K562 (cell line): ENCODE measurements at regions of chr13 and their contacts with region 1.

Region 1: GRCh38 chr13:27125357-27126282 is 46.0 kb downstream of the USP12 start:
- DNase-seq: peak; percentile 33 to 92 (median 52)
- ATAC-seq: peak; percentile 97
- H3K4me3 ChIP-seq: peak overlapping the region; percentile 57
- H3K27ac ChIP-seq: peak overlapping the region; percentile 99
- H3K4me1 ChIP-seq: peaks cover 0 to 22% of the 10 kb centered on the region in 2 experiments; a peak in 2 of 5 replicates
- H3K27me3 ChIP-seq: no peaks in the 10 kb centered on the region
- CTCF ChIP-seq: peak; percentile 39 to 65 (median 56)
- EP300 ChIP-seq: no peak
- POLR2A ChIP-seq: peak; percentile 76
- RAD21 ChIP-seq: peak; percentile 36 to 72

Region 2: GRCh38 chr13:26929971-26930730 is 195.5 kb before region 1 on chr13:
- CTCF ChIA-PET with region 1: no interaction called
- POLR2A ChIA-PET with region 1: no interaction called
- in situ Hi-C with region 1: no loop called
- intact Hi-C with region 1: no loop called
- DNase-seq: peak; percentile 71 to 77 (median 72)
- ATAC-seq: peak; percentile 95
- H3K4me3 ChIP-seq: no peak overlapping the region
- H3K27ac ChIP-seq: no peak overlapping the region
- H3K4me1 ChIP-seq: no peaks in the 10 kb centered on the region; a peak in 1 of 5 replicates
- H3K27me3 ChIP-seq: peaks cover 0 to 15% of the 10 kb centered on the region in 2 experiments
- CTCF ChIP-seq: peak; percentile 67 to 84 (median 81)
- EP300 ChIP-seq: no peak
- POLR2A ChIP-seq: no peak
- RAD21 ChIP-seq: peak; percentile 31 to 64

Region 3: DNA sequence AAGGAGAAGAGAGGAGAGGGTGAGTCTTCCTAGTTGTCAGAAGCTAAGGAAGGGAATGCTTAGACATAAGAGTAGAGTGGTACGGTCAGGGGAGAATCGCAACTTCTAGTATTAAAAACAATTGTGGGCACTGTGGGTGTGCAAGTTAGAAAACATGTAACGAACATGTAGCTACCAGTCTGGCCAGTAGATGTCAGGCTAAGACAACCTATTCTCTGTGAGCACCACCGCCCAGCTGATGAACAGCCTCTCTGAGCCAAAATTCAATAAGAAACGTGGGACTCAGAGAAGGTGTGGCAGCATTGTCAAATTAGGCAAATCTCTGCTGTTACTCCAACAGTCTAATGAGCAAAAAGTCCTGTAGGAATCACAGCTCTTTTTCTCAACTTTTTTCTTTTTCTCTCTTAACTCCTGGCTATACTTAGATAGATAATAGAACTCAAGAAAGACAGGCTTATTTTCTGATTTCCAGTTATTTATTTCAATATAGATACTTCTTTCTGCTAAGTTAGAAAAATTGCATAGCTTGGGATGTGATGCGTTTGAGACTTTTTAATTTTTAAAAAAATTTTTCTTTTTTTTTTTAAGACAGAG is 140.2 kb before region 1 on chr13:
- CTCF ChIA-PET with region 1: no interaction called
- POLR2A ChIA-PET with region 1: interaction called, 6 read pairs
- in situ Hi-C with region 1: no loop called
- intact Hi-C with region 1: loop called (anchors 5 kb)
- DNase-seq: peak; percentile 53 to 81 (median 63)
- ATAC-seq: peak; percentile 68
- H3K4me3 ChIP-seq: no peak overlapping the region
- H3K27ac ChIP-seq: no peak overlapping the region
- H3K4me1 ChIP-seq: peaks cover 28 to 29% of the 10 kb centered on the region in 2 experiments
- H3K27me3 ChIP-seq: no peaks in the 10 kb centered on the region; a peak in 1 of 5 replicates
- CTCF ChIP-seq: peak; percentile 68 to 83 (median 76)
- EP300 ChIP-seq: no peak
- POLR2A ChIP-seq: no peak
- RAD21 ChIP-seq: peak; percentile 84 to 91

Region 4: GRCh38 chr13:27022571-27023311 is 102.9 kb before region 1 on chr13:
- CTCF ChIA-PET with region 1: no interaction called
- POLR2A ChIA-PET with region 1: no interaction called
- in situ Hi-C with region 1: no loop called
- intact Hi-C with region 1: loop called (anchors 10 kb)
- DNase-seq: peak in 2 of 4 experiments; percentile 46 to 52
- ATAC-seq: peak; percentile 70
- H3K4me3 ChIP-seq: no peak overlapping the region
- H3K27ac ChIP-seq: peak overlapping the region; percentile 50; the same call in 2 of the 3 replicates
- H3K4me1 ChIP-seq: peaks cover 7 to 13% of the 10 kb centered on the region in 2 experiments
- H3K27me3 ChIP-seq: peaks cover 2 to 12% of the 10 kb centered on the region in 2 experiments
- CTCF ChIP-seq: no peak
- EP300 ChIP-seq: peak; percentile 39; the same call in 1 of the 2 replicates
- POLR2A ChIP-seq: no peak
- RAD21 ChIP-seq: no peak

Region 5: GRCh38 chr13:27137759-27138158 is 12.1 kb after region 1 on chr13:
- CTCF ChIA-PET with region 1: no interaction called
- POLR2A ChIA-PET with region 1: interaction called, 24 read pairs
- in situ Hi-C with region 1: no loop called
- intact Hi-C with region 1: no loop called
- DNase-seq: peak in 1 of 4 experiments; percentile 24
- ATAC-seq: peak; percentile 78
- H3K4me3 ChIP-seq: no peak overlapping the region
- H3K27ac ChIP-seq: peak overlapping the region; percentile 75
- H3K4me1 ChIP-seq: peaks cover 16 to 21% of the 10 kb centered on the region in 2 experiments; a peak in 4 of 5 replicates
- H3K27me3 ChIP-seq: no peaks in the 10 kb centered on the region
- CTCF ChIP-seq: no peak
- EP300 ChIP-seq: no peak
- POLR2A ChIP-seq: no peak
- RAD21 ChIP-seq: no peak

Region 6: DNA sequence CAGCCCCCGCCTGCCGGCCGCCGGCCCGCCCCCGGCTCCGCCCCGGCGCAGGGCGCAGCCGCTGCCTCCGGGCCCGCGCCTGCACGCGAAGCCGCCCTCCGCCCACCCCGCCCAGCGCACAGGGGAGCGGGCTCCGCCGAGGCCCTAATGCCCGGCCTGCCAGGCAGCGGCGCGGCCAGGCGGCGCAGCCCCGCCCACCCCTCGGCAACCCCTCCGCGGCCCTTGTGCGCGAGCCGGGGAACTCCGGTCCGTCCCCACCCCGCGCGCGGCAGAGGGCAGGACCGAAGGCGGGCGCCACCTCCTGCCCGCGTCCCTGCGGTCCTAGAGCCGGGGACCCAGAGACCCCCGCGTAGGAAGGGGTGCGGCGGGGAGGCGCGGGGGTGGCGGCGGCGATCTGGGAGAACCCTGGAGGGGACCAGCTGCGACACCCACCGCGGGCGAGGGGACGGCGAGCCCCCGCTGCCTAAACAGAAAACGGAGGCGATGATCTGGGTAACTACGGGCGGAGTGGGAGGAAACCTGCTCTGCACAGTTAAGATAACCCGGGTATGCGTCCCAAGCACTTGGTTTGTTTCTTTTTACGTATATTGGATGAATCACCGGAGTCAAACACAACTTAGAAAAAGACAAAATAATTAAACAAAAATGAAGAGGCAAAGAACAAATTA is 46.3 kb after region 1 on chr13:
- CTCF ChIA-PET with region 1: no interaction called
- POLR2A ChIA-PET with region 1: no interaction called
- in situ Hi-C with region 1: no loop called
- intact Hi-C with region 1: loop called (anchors 2 kb)
- DNase-seq: peak; percentile 77 to 82 (median 80)
- ATAC-seq: peak; percentile 87
- H3K4me3 ChIP-seq: peak overlapping the region; percentile 69
- H3K27ac ChIP-seq: peak overlapping the region; percentile 83
- H3K4me1 ChIP-seq: peaks cover under 1 to 34% of the 10 kb centered on the region in 2 experiments; a peak in 4 of 5 replicates
- H3K27me3 ChIP-seq: no peaks in the 10 kb centered on the region
- CTCF ChIP-seq: no peak
- EP300 ChIP-seq: peak; percentile 64; the same call in 1 of the 2 replicates
- POLR2A ChIP-seq: peak; percentile 53
- RAD21 ChIP-seq: 0 out of 4 replicates have a peak, but pooled peaks of 1 of the 2 experiments have one; percentile 6

Region 7: DNA sequence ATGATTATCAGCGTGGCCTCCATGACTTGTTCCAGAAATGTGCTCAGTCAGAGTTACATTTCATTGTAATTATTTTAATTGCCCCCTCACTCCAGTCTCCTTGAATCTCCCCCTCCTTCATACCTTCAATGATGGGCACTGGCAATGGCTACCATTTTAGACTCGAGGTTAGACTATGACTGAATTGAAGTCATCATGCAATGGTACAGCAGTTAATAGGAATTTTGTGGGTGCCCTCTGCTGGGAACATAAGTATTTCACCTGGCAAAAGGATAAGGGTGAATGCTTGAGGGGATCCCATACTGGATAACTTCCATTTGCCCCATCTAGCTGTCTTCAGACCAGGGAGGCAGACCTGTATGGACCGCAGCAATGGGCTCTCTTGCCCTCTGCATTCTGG is 78.2 kb after region 1 on chr13:
- CTCF ChIA-PET with region 1: no interaction called
- POLR2A ChIA-PET with region 1: interaction called, 3 read pairs
- in situ Hi-C with region 1: no loop called
- intact Hi-C with region 1: loop called (anchors 1 kb)
- DNase-seq: peak in 1 of 4 experiments; percentile 42
- ATAC-seq: peak; percentile 82
- H3K4me3 ChIP-seq: no peak overlapping the region
- H3K27ac ChIP-seq: no peak overlapping the region
- H3K4me1 ChIP-seq: peaks cover 0 to 4% of the 10 kb centered on the region in 2 experiments; a peak in 3 of 5 replicates
- H3K27me3 ChIP-seq: no peaks in the 10 kb centered on the region
- CTCF ChIP-seq: peak; percentile 38 to 48 (median 44); a peak in 5 of 6 replicates
- EP300 ChIP-seq: no peak
- POLR2A ChIP-seq: no peak
- RAD21 ChIP-seq: peak; percentile 41 to 76

Region 8: GRCh38 chr13:27362064-27362883 is 236.7 kb after region 1 on chr13:
- CTCF ChIA-PET with region 1: no interaction called
- POLR2A ChIA-PET with region 1: no interaction called
- in situ Hi-C with region 1: no loop called
- intact Hi-C with region 1: loop called (anchors 5 kb)
- DNase-seq: peak; percentile 82 to 83 (median 82)
- ATAC-seq: peak; percentile 97
- H3K4me3 ChIP-seq: peak overlapping the region; percentile 30
- H3K27ac ChIP-seq: no peak overlapping the region
- H3K4me1 ChIP-seq: peaks cover 0 to 7% of the 10 kb centered on the region in 2 experiments; a peak in 2 of 5 replicates
- H3K27me3 ChIP-seq: peaks cover 7 to 19% of the 10 kb centered on the region in 2 experiments; a peak in 4 of 5 replicates
- CTCF ChIP-seq: peak; percentile 86 to 90 (median 90)
- EP300 ChIP-seq: no peak
- POLR2A ChIP-seq: no peak
- RAD21 ChIP-seq: peak; percentile 72 to 86